ENCODE measurements at regions of chr7 and their contacts with region 1.

Region 1: DNA sequence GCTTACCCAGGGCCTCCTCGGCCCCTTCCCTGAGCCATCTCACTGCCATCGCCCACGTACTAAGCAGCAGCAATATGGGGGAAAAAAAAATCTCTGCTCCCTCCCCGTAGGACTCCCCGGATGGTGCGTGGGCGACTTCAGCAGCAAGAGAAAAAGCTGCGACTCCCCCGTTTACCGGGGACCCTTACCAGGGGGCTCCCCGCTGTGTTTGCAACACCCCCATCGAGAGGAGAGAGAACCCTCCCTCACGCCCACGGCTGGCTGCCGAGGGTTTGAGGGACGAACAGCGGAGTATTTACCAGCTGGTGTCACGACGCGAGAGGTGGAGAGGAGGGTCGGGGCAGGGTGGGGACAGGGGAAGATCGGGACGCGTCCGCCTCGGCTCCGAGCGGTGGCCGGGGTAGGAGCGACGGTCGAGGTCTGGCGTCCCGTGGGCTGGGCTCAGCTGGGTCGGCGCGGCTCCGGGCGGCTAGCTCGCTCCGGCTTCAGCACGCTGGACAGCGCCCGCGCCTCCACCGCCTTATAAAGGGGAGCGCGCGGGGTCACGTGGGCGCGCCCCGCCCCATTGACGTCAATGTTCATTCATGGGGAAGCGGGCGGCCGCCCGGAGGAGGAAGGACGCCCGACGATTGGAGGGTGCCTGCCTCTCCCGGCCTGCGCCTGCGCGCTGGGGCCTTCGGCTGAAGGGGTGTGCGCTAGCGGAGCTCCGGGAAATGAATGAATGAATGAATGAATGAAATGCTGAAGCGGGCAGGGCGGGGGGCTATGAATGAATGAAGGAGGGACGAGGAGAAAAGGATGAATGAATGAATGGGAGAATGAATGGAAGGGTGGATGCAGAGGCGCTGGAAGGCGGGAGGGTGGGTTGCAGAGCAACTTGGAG is at the start of gene VGF:
- DNase-seq: peak; percentile 81 to 92 (median 89)
- H3K4me3 ChIP-seq: peak within 1 kb of the TSS in 57 of 59 donors; percentile 19 to 66 (median 47)
- H3K27ac ChIP-seq: peak within 1 kb of the TSS in 31 of 59 donors; percentile 2 to 89 (median 44)
- H3K27me3 ChIP-seq: peaks cover 0 to 84% (median 62%) of the 10 kb centered on the region in 45 donors
- CTCF ChIP-seq: peak in 29 of 56 donors; percentile 1 to 48 (median 25)
- total RNA-seq, gene VGF: 5.8 to 171 (median 31.4) TPM

Region 2: DNA sequence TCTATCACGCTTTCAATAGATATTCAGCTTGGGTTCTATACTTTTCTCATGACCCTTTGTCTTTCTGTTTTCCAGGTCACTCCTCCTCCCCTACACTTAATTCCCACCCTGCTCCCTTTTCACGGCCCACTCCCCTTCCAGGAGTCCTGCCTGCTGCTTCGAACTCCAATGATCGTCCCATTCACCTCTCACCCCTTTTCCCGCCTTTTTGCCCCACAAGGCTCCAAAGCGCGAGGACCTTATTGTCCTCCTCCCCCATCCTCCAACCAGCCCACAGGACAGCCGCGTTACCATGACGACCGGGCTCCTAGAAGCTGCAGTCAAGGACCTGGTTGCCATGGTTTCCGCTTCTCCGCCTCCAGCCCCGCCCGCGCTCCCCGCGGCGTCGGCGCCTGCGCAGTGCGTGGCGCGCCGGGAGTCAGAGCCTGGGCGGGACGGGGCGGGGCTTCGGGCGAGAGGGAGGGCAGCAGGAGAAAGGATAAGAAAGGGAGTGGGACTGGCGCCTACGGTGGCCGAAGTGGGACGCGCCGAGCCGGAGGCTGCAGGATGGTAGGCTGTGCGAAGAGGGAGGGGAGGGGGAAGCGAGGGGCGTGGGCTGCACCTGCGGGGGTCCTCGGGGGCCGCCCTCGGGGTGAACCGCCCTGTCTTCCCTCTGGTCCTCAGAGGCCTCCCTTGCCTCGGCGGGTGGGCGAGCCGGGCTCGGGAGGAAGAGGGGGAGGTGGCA is 11.2 kb before region 1 on chr7 and contains the start of gene AP1S1:
- intact Hi-C with region 1: loop called in 1 of 2 experiments (anchors 1 kb)
- DNase-seq: peak; percentile 88 to 96 (median 92)
- H3K4me3 ChIP-seq: peak within 1 kb of the TSS; percentile 66 to 94 (median 83)
- H3K27ac ChIP-seq: peak within 1 kb of the TSS in 48 of 59 donors; percentile 1 to 90 (median 64)
- H3K27me3 ChIP-seq: no peaks in the 10 kb centered on the region
- CTCF ChIP-seq: peak in 22 of 56 donors; percentile 2 to 48 (median 20)
- total RNA-seq, gene AP1S1: 39.7 to 176 (median 100.0) TPM

Region 3: GRCh38 chr7:101474178-101474577 is 308.9 kb after region 1 on chr7:
- intact Hi-C with region 1: no loop called
- DNase-seq: peak in 1 of 10 donors; percentile 2
- H3K4me3 ChIP-seq: no peak overlapping the region
- H3K27ac ChIP-seq: no peak overlapping the region
- H3K27me3 ChIP-seq: no peaks in the 10 kb centered on the region
- CTCF ChIP-seq: no peak

Measured in dorsolateral prefrontal cortex (tissue), 120 donors.